Ascending aorta (tissue), 2 donors: ENCODE measurements at regions of chr11 and their contacts with region 1.

Region 1: DNA sequence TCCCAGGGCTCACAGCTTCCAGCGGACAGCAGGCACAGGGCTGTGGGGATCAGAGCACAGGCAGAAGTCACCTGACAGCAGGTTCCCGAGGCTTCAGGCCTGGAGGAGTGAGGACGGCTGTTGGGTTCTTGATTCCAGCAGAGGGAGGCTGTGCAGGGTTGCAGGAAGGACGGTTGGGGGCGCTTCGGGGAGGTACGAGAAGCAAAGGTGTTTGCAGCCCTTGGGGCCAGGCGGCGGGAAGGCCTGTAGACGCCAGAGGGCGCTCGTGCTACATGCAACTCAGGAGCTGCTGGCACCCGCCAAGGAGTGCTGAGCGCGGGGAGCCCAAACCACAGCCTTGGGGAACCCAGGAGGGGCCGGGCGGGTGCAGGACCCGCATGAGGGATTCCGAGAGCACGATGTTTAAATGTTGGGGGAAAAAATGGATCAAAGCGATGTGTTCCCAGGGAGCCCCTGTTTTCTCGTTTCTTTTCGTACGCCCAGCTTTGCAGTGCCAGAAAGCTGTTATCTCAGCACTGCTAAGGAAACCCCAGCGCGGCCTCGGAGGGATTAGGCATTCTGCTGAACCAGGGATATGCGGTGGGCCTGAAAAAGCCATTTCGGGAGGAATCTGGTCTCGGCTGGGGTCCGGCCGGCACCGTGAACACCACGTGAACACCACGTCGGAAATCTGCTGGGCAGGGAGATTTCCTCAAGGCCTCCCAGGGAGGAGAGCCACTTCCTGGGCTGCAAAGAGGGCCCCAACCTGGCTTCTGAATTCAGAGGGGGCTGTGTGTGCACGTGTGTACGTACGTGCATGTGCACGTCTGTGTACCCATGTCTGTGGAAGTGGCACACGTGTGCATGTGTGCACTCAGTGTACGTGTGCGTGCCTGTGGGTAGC is 88.1 kb downstream of the KCNQ1 start:
- DNase-seq: peak; percentile 38 to 93
- H3K4me3 ChIP-seq: peak overlapping the region; percentile 34 to 45
- H3K27ac ChIP-seq: no peak overlapping the region
- H3K4me1 ChIP-seq: peaks cover 0 to 3% of the 10 kb centered on the region in 2 donors
- H3K27me3 ChIP-seq: no peaks in the 10 kb centered on the region
- CTCF ChIP-seq: peak; percentile 98 to 99 (median 98)

Region 2: DNA sequence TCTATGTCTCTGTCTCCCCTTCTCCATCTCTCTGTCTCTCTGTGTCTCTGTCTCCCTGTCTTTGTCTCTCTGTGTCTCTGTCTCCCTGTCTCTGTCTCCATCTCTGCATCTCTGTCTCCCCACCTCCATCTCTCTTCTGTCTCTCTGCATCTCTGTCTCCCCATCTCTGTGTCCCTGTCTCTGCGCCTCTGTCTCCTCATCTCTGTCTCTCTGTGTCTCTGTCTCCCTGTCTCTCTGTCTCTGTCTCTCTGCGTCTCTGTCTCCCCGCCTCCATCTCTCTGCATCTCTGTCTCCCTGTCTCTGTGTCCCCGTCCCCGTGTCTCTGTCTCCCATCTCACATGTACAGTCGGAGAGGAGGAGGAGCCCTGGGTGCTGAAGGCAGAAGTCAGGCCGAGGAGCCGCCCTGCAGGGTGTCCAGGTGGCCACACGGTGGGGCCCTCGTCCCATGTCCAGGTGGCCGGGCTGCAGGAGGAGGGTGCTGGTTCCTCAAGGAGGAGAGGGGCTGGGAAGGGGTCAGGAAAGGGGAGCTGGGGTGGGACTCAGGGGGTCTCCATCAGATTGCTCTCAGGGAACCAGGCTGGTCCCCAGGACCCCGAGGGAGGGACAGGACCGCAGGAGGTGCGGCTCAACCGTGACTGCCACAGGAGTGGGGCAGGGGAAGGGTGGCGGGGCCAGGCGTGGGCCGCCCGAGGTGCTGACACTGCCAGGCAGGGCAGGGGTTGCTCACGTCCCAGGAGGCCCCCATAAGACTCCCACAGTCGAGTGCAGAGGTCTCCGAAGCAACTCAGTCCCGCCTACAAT is 335.8 kb before region 1 on chr11:
- intact Hi-C with region 1: loop called (anchors 2 kb)
- DNase-seq: peak; percentile 17 to 84
- H3K4me3 ChIP-seq: no peak overlapping the region
- H3K27ac ChIP-seq: no peak overlapping the region
- H3K4me1 ChIP-seq: no peaks in the 10 kb centered on the region
- H3K27me3 ChIP-seq: no peaks in the 10 kb centered on the region
- CTCF ChIP-seq: peak; percentile 69 to 86 (median 85)

Region 3: DNA sequence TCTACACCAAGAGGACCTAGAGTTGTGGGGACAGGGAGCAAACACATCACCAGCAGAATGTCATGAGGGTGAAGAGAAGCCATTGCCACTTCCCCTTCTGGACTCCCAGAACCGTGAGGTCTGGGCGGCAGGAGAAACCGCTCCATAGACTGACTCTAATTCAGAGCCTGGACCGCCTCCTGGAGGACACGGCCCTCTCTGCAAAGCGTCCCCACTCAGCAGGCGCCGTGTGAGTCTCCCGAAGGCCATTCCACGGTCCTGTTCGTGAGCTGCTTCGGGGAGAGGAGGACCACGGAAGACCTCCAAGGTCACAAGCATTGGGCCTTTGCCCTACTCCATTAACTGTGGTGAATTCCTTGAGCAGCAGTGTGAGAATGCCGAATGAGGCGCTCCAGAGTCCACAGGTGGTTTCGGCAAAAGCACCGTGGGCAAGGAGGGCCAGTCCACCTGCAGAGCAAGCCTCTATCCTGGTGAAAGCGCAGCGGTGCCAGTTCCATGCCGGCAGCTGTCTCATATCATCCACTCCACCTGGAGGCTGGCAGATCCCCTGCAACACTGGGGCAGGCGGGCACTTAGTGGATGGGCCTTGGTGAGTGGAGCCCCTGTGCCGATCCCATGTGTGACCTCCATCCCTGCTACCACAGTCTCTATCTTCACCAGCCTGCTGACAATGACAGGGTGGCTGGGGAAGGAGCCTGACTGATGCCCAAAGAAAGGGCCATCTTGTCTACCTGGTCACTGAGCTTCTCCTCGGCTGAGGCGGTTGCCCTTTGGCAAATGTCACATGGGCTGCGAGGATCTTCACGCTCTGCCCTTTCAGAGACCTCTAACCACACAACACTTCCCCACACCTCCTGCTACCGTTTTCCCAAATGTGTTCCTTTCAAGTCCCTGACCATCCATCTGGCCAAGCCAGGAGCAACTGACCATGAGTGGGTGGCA is 238.7 kb before region 1 on chr11:
- intact Hi-C with region 1: no loop called
- DNase-seq: peak in 1 of 2 donors; percentile 61
- H3K4me3 ChIP-seq: no peak overlapping the region
- H3K27ac ChIP-seq: no peak overlapping the region
- H3K4me1 ChIP-seq: no peaks in the 10 kb centered on the region
- H3K27me3 ChIP-seq: no peaks in the 10 kb centered on the region
- CTCF ChIP-seq: no peak

Region 4: DNA sequence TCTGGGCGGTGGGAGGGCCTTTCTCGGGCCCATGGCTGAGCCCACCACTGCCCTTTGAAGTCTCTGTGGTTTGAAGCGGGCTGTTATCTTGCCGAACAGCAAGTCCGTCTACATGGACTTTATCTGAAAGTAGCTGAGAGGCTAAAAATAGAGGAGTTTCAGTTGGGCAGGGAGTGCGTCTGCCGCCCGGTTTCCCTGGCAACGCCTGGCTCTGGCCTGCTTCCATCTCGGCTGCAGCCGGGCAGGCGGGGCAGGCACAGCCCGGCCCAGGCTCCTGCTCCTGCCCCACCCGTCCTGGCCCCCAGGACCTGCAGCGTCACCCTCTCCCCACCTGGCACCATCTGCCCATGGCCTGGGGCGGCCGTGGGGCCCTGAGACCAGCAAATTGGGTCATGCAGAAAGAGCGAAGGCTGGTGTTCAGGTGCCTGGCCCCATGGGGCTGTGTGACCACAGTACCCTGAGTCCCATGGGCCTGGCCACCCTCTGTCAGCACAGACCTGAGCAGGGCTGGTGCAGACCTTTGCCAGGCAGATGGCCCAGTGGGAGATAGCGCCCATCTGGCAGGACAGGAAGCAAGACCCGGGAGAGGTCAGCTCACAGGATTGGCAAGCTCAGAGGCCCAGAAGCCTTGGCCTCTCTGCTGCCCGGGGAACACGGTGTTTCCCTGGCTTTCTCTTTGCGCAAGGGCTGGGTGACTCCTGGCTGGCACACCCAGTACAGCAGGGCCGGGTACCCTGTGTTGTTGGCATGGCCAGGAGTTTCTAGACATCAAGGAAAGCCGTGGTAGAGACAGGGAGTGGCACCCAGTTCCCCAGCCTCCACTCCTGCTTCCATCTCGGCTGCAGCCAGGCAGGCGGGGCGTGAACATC is 245.9 kb after region 1 on chr11:
- intact Hi-C with region 1: loop called (anchors 5 kb)
- DNase-seq: peak; percentile 47 to 89
- H3K4me3 ChIP-seq: peak overlapping the region; percentile 18 to 53
- H3K27ac ChIP-seq: peak overlapping the region; percentile 68 to 81
- H3K4me1 ChIP-seq: peaks cover 11 to 36% of the 10 kb centered on the region in 2 donors
- H3K27me3 ChIP-seq: no peaks in the 10 kb centered on the region
- CTCF ChIP-seq: peak in 2 of 3 experiments; percentile 13 to 52

Region 5: DNA sequence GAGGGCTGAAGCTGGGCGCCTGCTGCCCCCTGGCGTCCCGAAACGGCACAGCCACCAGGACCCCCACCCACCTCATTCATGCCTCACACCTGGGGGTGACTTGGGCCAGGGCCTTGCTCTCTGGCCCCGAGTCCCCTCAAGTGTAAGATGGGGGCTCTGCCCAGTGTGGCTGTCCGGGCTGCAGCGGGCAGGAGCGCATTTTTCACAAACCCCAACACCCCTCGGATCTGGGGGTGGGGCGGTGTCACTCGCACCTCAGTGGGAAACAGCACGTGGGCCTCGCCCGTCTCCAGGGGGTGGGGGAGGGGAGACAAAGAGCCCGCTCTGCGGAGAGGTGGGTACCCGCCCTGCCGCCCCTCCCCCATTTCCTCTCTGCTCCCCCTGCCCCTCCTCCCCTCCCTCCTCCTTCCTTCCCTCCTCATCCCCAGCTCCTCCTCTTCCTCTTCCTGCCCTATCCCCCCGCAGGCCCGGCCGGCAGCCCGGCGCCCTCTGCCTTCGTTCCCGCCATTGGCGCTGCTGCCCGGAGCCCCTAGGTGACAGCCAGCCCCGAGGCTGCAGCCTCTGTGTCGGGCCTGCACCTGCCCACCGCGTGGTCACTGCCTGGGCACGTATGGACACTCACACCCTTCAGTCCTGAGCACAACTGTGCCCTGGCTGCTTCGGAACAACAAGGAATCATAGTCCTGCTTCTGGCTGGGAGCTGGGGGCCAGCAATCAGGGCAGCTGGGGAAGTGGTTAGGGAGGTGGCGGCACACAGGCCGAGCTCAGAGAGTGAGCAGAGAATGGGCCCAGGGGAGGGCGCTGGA is 359.5 kb after region 1 on chr11:
- intact Hi-C with region 1: loop called (anchors 1 kb)
- DNase-seq: no peak
- H3K4me3 ChIP-seq: peak overlapping the region; percentile 57 to 66
- H3K27ac ChIP-seq: peak overlapping the region in 1 of 2 donors; percentile 55
- H3K4me1 ChIP-seq: peaks cover 3 to 11% of the 10 kb centered on the region in 2 donors
- H3K27me3 ChIP-seq: no peaks in the 10 kb centered on the region
- CTCF ChIP-seq: peak; percentile 92 to 95 (median 92)